Activated naive CD4-positive, alpha-beta T cell treated with anti-CD3 and anti-CD28 coated beads for 36 hours (primary cell): ENCODE measurements at regions of chr3 and their contacts with region 1.

Region 1: DNA sequence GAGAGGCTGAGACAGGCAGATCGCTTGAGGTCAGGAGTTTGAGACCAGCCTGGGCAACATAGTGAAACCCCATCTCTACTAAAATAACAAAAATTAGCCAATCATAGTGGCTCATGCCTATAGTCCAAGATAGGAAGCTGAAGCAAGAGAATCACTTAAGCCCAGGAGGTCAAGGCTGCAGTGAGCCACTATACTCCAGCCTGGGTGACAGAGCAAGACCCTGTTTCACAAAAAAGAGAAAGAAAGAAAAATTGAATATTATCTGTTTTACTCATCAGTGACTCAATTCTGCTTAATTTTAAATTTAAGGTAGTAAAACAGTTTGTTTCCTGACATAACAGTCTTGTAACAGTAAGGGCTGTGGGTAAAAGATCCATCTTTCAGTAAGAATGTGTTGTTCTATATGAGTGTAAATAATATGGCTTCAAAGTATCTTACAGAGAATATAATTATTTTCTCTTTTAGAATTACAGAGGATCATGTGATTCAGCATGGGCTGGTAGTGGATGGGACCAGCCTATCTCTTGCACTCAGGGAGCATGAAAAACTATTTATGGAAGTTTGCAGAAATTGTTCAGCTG is 85.8 kb downstream of the ATP11B start:
- DNase-seq: no peak
- H3K4me3 Mint-ChIP-seq: no peak overlapping the region
- H3K27ac Mint-ChIP-seq: no peak overlapping the region
- H3K4me1 Mint-ChIP-seq: peaks cover 2% of the 10 kb centered on the region
- H3K27me3 Mint-ChIP-seq: no peaks in the 10 kb centered on the region

Region 2: GRCh38 chr3:182862159-182862860 is 16.8 kb before region 1 on chr3:
- CTCF ChIA-PET with region 1: no interaction called
- intact Hi-C with region 1: loop called (anchors 2 kb)
- DNase-seq: no peak
- H3K4me3 Mint-ChIP-seq: no peak overlapping the region
- H3K27ac Mint-ChIP-seq: peak overlapping the region; percentile 50
- H3K4me1 Mint-ChIP-seq: peaks cover 14% of the 10 kb centered on the region
- H3K27me3 Mint-ChIP-seq: no peaks in the 10 kb centered on the region

Region 3: DNA sequence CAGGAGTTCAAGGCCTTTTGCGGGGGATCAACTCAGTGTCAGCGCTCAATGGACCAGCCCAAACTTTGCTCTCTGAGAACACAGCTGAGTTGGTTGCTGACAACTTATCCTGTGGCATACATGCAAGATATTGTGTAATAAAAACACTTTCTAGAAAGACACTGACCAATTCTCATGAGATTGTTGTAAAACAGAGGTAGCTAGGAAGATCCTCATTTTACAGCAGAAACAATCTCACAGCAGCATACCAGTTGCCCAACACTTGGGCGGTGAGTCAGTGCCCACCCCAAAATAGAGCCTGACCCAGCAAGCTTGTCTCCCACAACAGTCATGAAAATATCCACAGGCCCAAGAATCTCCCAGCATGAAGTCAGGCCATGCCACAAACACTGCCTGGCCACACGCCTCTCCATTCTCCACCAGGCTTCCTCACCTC is 658.2 kb after region 1 on chr3:
- CTCF ChIA-PET with region 1: no interaction called
- intact Hi-C with region 1: no loop called
- DNase-seq: no peak
- H3K4me3 Mint-ChIP-seq: no peak overlapping the region
- H3K27ac Mint-ChIP-seq: no peak overlapping the region
- H3K4me1 Mint-ChIP-seq: peaks cover 79% of the 10 kb centered on the region
- H3K27me3 Mint-ChIP-seq: no peaks in the 10 kb centered on the region